Esophagus muscularis mucosa (tissue), 4 donors: ENCODE measurements at regions of chr12 and their contacts with region 1.

Region 1: GRCh38 chr12:21989819-21990412 is 48.7 kb upstream of the ABCC9 start:
- DNase-seq: no peak
- H3K4me3 ChIP-seq: no peak overlapping the region
- H3K27ac ChIP-seq: no peak overlapping the region
- H3K4me1 ChIP-seq: no peaks in the 10 kb centered on the region
- H3K27me3 ChIP-seq: no peaks in the 10 kb centered on the region
- CTCF ChIP-seq: peak; percentile 55 to 64 (median 59)
- EP300 ChIP-seq: no peak
- POLR2A ChIP-seq: no peak

Region 2: GRCh38 chr12:21697904-21698630 is 291.8 kb before region 1 on chr12:
- intact Hi-C with region 1: loop called (anchors 5 kb)
- DNase-seq: no peak
- H3K4me3 ChIP-seq: peak overlapping the region in 3 of 4 donors; percentile 11 to 33 (median 14)
- H3K27ac ChIP-seq: no peak overlapping the region
- H3K4me1 ChIP-seq: peaks cover 3 to 6% (median 5%) of the 10 kb centered on the region in 4 donors
- H3K27me3 ChIP-seq: no peaks in the 10 kb centered on the region
- CTCF ChIP-seq: peak; percentile 67 to 73 (median 67)
- EP300 ChIP-seq: no peak
- POLR2A ChIP-seq: no peak

Region 3: GRCh38 chr12:21773263-21773741 is 216.6 kb before region 1 on chr12:
- intact Hi-C with region 1: loop called (anchors 5 kb)
- DNase-seq: no peak
- H3K4me3 ChIP-seq: peak overlapping the region; percentile 57 to 73 (median 68)
- H3K27ac ChIP-seq: peak overlapping the region; percentile 87 to 92 (median 88)
- H3K4me1 ChIP-seq: peaks cover 13 to 48% (median 38%) of the 10 kb centered on the region in 4 donors
- H3K27me3 ChIP-seq: no peaks in the 10 kb centered on the region
- CTCF ChIP-seq: peak; percentile 43 to 50 (median 50)
- EP300 ChIP-seq: no peak
- POLR2A ChIP-seq: no peak

Region 4: GRCh38 chr12:21891751-21892217 is 98.1 kb before region 1 on chr12:
- intact Hi-C with region 1: no loop called
- DNase-seq: no peak
- H3K4me3 ChIP-seq: peak overlapping the region in 1 of 4 donors; percentile 9
- H3K27ac ChIP-seq: peak overlapping the region; percentile 71 to 80 (median 76)
- H3K4me1 ChIP-seq: peaks cover 23 to 61% (median 59%) of the 10 kb centered on the region in 4 donors
- H3K27me3 ChIP-seq: no peaks in the 10 kb centered on the region
- CTCF ChIP-seq: no peak
- EP300 ChIP-seq: no peak
- POLR2A ChIP-seq: no peak

Region 5: GRCh38 chr12:21949036-21949435 is 40.9 kb before region 1 on chr12:
- intact Hi-C with region 1: loop called (anchors 5 kb)
- DNase-seq: no peak
- H3K4me3 ChIP-seq: no peak overlapping the region
- H3K27ac ChIP-seq: no peak overlapping the region
- H3K4me1 ChIP-seq: no peaks in the 10 kb centered on the region
- H3K27me3 ChIP-seq: no peaks in the 10 kb centered on the region
- CTCF ChIP-seq: no peak
- EP300 ChIP-seq: no peak
- POLR2A ChIP-seq: no peak